Activated naive CD4-positive, alpha-beta T cell treated with anti-CD3 and anti-CD28 coated beads for 36 hours (primary cell): ENCODE measurements at regions of chr3 and their contacts with region 1.

Region 1: DNA sequence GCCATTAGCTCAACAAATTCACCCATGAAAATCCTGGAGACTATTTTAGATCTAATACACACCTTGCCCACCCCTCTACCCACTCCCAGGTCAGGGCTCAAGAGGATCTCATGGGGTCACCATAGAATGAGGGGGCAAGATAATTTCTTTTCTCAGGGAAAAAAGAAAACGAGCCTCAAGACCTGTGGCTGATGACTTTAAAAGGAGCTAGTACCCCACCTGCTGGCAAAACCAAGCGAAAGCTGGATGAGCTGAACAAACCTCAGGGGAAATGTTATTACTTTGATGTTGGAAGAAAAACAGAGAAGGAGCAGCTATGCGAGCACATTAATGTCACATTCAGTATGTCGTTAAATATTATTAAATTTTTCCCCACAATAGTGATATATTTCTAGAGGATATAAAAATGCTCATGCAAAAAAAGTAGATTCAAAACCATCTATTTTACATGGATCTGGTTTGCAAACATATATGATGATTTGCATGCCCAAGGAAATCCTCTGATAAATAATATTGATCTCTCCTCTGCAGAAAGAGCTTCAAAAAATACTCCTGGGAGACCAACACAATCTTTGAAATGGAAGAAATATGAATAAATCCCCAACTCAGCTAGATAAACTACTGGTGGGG is 37.7 kb downstream of the PLD1 start:
- DNase-seq: peak; percentile 76
- H3K4me3 Mint-ChIP-seq: no peak overlapping the region
- H3K27ac Mint-ChIP-seq: no peak overlapping the region
- H3K4me1 Mint-ChIP-seq: no peaks in the 10 kb centered on the region
- H3K27me3 Mint-ChIP-seq: peaks cover 4% of the 10 kb centered on the region

Region 2: GRCh38 chr3:170414202-170414663 is 1358.3 kb before region 1 on chr3:
- CTCF ChIA-PET with region 1: no interaction called
- intact Hi-C with region 1: loop called (anchors 5 kb)
- DNase-seq: peak; percentile 59
- H3K4me3 Mint-ChIP-seq: no peak overlapping the region
- H3K27ac Mint-ChIP-seq: no peak overlapping the region
- H3K4me1 Mint-ChIP-seq: peaks cover 6% of the 10 kb centered on the region
- H3K27me3 Mint-ChIP-seq: peaks cover 16% of the 10 kb centered on the region

Region 3: GRCh38 chr3:171162986-171163723 is 609.4 kb before region 1 on chr3:
- CTCF ChIA-PET with region 1: interaction called, 13 read pairs
- intact Hi-C with region 1: loop called (anchors 2 kb)
- DNase-seq: peak; percentile 44
- H3K4me3 Mint-ChIP-seq: no peak overlapping the region
- H3K27ac Mint-ChIP-seq: no peak overlapping the region
- H3K4me1 Mint-ChIP-seq: peaks cover 25% of the 10 kb centered on the region
- H3K27me3 Mint-ChIP-seq: no peaks in the 10 kb centered on the region

Region 4: DNA sequence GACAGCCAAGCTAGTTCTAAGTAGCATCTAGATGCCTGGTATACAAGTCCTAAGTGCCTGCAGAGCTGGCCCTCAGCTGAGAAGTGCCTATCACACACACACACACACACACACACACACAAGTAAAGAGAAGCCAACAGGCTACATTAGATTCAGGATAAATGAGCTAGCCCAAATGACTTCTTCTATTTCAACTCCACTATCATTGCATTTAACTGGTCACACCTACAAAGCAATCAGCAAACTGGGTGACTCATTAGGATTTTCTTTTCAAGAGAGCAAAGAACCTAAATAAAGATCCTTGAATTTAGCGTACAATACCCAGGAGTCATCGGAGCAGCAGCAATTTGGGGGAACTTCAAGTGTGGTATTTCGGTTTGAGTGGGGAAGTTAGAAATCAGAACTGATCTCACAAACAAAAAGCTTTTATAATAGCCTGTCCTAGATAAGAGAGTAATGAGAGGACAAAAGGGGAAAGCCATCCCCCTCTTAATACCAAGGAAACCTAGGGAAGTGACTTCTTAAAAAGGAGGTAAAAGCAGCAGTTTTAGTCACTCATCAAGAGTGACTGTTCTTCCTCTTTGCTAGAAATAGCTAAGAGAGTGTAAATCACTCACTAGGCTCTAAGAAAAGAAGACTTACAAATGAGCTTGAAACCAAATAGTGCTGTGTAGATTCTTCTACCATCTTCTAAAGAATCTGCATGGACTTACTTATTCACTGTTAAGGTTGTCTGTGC is 425.1 kb before region 1 on chr3:
- CTCF ChIA-PET with region 1: no interaction called
- intact Hi-C with region 1: no loop called
- DNase-seq: no peak
- H3K4me3 Mint-ChIP-seq: no peak overlapping the region
- H3K27ac Mint-ChIP-seq: no peak overlapping the region
- H3K4me1 Mint-ChIP-seq: peaks cover 67% of the 10 kb centered on the region
- H3K27me3 Mint-ChIP-seq: no peaks in the 10 kb centered on the region

Region 5: GRCh38 chr3:171640520-171641412 is 131.8 kb before region 1 on chr3:
- CTCF ChIA-PET with region 1: interaction called, 28 read pairs
- intact Hi-C with region 1: no loop called
- DNase-seq: no peak
- H3K4me3 Mint-ChIP-seq: no peak overlapping the region
- H3K27ac Mint-ChIP-seq: no peak overlapping the region
- H3K4me1 Mint-ChIP-seq: no peaks in the 10 kb centered on the region
- H3K27me3 Mint-ChIP-seq: no peaks in the 10 kb centered on the region

Region 6: GRCh38 chr3:171753665-171754408 is 18.7 kb before region 1 on chr3:
- CTCF ChIA-PET with region 1: interaction called, 18 read pairs
- intact Hi-C with region 1: no loop called
- DNase-seq: no peak
- H3K4me3 Mint-ChIP-seq: no peak overlapping the region
- H3K27ac Mint-ChIP-seq: no peak overlapping the region
- H3K4me1 Mint-ChIP-seq: no peaks in the 10 kb centered on the region
- H3K27me3 Mint-ChIP-seq: peaks cover 9% of the 10 kb centered on the region

Region 7: DNA sequence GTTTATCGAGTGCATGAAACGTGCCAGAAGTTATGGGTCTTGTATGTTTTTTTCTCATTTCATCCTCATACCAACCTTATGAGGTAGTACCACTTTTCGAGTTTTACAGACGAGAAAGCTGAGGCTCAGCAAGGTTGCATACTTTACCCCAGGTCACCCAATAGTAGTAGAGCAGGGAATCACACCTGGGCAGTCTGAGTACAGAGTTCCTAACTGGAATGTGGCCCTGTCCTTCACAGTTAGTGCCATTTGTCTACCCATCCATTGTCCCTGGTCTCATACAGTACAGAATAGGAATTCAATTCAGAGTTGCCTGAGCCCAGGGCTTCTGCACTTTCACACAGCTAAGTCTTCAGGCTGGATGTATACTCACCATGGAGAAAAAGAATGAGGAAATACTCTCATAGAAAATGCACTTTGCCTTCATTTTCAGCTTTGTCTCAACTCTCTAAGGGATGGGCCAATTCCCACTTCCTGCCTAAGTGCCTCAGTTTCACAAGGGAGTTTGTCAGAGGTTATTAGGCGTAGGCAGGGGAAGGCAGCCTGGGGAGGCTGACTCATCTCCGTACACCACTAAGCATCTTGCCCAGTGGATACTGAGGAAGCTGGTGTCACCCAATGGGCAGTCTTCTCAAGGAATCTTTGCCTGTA is 163.8 kb after region 1 on chr3:
- CTCF ChIA-PET with region 1: no interaction called
- intact Hi-C with region 1: no loop called
- DNase-seq: no peak
- H3K4me3 Mint-ChIP-seq: no peak overlapping the region
- H3K27ac Mint-ChIP-seq: no peak overlapping the region
- H3K4me1 Mint-ChIP-seq: no peaks in the 10 kb centered on the region
- H3K27me3 Mint-ChIP-seq: no peaks in the 10 kb centered on the region

Region 8: GRCh38 chr3:172341482-172342059 is 569.0 kb after region 1 on chr3:
- CTCF ChIA-PET with region 1: no interaction called
- intact Hi-C with region 1: loop called (anchors 5 kb)
- DNase-seq: peak; percentile 14
- H3K4me3 Mint-ChIP-seq: no peak overlapping the region
- H3K27ac Mint-ChIP-seq: no peak overlapping the region
- H3K4me1 Mint-ChIP-seq: no peaks in the 10 kb centered on the region
- H3K27me3 Mint-ChIP-seq: no peaks in the 10 kb centered on the region